PC-3 (cell line): ENCODE measurements at regions of chr13 and their contacts with region 1.

Region 1: DNA sequence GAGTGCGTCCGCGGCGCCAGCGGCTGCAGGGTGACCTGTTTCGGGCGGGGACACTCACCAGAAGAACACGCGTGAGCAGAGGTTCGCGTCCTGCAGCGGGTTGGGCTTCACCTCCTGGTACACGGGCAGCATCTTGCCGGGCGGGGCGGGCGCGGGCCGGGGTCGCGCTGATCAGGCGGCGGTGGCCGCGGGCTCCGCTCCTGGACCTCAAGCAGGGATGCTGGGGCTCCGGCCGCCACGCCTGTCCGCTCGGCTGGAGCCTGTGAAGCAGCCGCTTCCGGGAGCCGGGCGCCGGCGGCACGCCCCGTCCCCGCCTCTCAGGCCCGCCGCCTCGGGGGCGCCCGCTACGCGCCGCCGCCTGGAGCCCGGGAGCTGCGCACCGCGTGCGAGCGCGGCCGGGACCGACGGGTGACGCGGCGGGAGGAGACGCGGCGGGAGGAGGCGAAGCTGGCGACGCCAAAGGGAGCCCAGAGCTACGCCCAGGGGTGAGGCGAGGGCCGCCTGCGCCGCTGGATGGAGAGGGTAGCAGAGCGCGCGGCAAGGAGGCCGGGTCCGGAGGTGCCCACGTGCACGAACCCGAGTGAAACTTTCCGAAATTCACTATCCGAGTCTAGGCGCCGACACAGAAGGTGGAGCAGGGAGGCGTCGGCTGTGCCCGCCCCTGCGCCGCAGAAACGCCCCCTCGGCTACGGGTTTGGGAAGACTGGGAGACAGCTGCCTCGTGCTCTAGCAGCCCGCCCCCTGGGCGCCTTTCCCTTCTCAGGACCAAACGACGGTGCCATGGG is at the start of gene ABCC4:
- DNase-seq: peak; percentile 75
- ATAC-seq: peak; percentile 71
- H3K4me3 ChIP-seq: peak within 1 kb of the TSS; percentile 85
- H3K27ac ChIP-seq: peak within 1 kb of the TSS; percentile 59
- H3K4me1 ChIP-seq: peaks cover 30% of the 10 kb centered on the region
- H3K27me3 ChIP-seq: no peaks in the 10 kb centered on the region
- CTCF ChIP-seq: no peak
- total RNA-seq, gene ABCC4: 17.7 and 18.9 TPM in 2 replicates

Region 2: DNA sequence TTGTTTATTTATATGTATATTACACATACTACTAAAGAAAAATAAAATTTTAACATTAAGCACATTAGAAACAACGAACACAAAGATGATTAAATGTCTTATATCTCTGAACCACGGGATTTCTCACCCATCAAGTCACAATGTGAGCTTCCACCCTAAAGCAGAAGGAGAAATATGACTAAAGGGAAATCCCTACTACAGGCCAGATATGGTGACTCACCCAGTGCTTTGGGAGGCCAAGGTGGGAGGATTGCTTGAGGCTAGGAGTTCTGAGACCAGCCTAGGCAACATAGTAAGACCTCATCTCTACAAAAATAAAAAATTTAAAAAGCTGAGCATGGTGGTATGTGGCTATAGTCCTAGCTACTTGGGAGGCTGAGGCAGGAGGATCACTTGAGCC is 846.5 kb before region 1 on chr13:
- CTCF ChIA-PET with region 1: no interaction called
- POLR2A ChIA-PET with region 1: no interaction called
- intact Hi-C with region 1: no loop called
- DNase-seq: peak; percentile 20
- ATAC-seq: no peak
- H3K4me3 ChIP-seq: no peak overlapping the region
- H3K27ac ChIP-seq: no peak overlapping the region
- H3K4me1 ChIP-seq: no peaks in the 10 kb centered on the region
- H3K27me3 ChIP-seq: no peaks in the 10 kb centered on the region
- CTCF ChIP-seq: no peak

Region 3: GRCh38 chr13:95217920-95218830 is 83.2 kb before region 1 on chr13:
- CTCF ChIA-PET with region 1: no interaction called
- POLR2A ChIA-PET with region 1: no interaction called
- intact Hi-C with region 1: loop called (anchors 5 kb)
- DNase-seq: peak; percentile 9
- ATAC-seq: peak; percentile 50
- H3K4me3 ChIP-seq: no peak overlapping the region
- H3K27ac ChIP-seq: peak overlapping the region; percentile 41
- H3K4me1 ChIP-seq: peaks cover 14% of the 10 kb centered on the region
- H3K27me3 ChIP-seq: no peaks in the 10 kb centered on the region
- CTCF ChIP-seq: no peak

Region 4: GRCh38 chr13:95267662-95268342 is 33.6 kb before region 1 on chr13:
- CTCF ChIA-PET with region 1: interaction called, 11 read pairs
- POLR2A ChIA-PET with region 1: no interaction called
- intact Hi-C with region 1: loop called (anchors 1 kb)
- DNase-seq: peak; percentile 56
- ATAC-seq: no peak
- H3K4me3 ChIP-seq: no peak overlapping the region
- H3K27ac ChIP-seq: peak overlapping the region; percentile 67
- H3K4me1 ChIP-seq: peaks cover 42% of the 10 kb centered on the region
- H3K27me3 ChIP-seq: no peaks in the 10 kb centered on the region
- CTCF ChIP-seq: no peak

Region 5: DNA sequence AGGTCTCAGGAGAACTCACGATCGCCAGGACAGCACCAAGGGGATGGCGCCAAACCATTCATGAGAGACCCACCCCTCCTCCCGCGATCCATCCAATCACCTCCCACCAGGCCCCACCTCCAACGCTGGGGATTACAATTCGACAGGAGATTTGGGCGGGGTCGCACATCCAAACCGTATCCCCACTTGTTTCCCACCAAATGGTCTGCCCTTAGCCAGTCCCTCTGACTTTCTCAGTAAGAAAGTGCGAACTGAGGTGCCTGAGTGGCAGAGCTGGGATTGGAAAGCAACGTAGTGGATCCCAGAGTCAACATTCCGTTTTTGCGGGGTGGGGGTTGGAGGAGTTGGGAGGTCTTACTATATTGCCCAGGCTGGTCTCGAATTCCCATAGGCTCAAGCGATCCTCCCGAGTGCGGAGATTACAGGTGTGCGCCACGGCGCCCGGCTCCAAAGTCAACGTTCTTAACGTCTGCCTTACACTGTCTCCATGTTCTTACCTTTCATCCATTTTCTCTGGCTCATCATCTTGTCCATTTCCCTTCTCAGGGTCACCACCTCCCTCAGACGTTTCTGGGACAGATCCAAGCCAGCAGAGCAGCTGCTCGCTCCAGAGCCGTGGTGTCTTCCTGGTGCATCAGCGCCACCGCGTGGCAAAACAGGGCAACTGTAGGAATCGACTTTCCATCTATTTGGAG is 102.6 kb after region 1 on chr13:
- CTCF ChIA-PET with region 1: interaction called, 5 read pairs
- POLR2A ChIA-PET with region 1: no interaction called
- intact Hi-C with region 1: loop called (anchors 5 kb)
- DNase-seq: peak; percentile 85
- ATAC-seq: peak; percentile 83
- H3K4me3 ChIP-seq: peak overlapping the region; percentile 63
- H3K27ac ChIP-seq: no peak overlapping the region
- H3K4me1 ChIP-seq: no peaks in the 10 kb centered on the region
- H3K27me3 ChIP-seq: no peaks in the 10 kb centered on the region
- CTCF ChIP-seq: peak; percentile 90